Gastrocnemius medialis (tissue), 4 donors: ENCODE measurements at regions of chr14 and their contacts with region 1.

Region 1: DNA sequence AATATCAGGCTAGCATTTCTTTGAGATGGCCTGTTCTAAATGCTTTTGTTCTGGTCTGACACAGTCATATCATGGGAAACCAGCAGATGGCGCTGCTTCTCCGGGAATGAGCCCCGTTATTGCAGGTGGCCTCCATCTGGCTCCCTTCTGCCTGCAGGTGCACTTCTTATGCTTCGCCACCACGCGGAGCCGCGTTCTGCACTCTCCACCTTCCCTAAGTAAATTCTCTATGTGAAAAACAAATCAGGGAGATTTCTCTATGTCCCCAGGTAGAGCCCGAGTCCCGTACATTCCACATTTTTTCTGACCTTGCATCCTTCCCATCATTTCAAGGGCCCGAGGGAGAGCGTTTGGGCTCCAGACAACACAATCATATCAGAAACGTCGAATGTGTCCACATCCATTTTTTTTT is 26.2 kb downstream of the GLRX5 start:
- DNase-seq: peak; percentile 56 to 73
- ATAC-seq: peak; percentile 79 to 95
- H3K4me3 ChIP-seq: no peak overlapping the region
- H3K27ac ChIP-seq: no peak overlapping the region
- H3K4me1 ChIP-seq: peaks cover 0 to 2% of the 10 kb centered on the region in 2 donors
- H3K27me3 ChIP-seq: no peaks in the 10 kb centered on the region
- CTCF ChIP-seq: peak; percentile 88 to 95 (median 92)
- POLR2A ChIP-seq: no peak

Region 2: DNA sequence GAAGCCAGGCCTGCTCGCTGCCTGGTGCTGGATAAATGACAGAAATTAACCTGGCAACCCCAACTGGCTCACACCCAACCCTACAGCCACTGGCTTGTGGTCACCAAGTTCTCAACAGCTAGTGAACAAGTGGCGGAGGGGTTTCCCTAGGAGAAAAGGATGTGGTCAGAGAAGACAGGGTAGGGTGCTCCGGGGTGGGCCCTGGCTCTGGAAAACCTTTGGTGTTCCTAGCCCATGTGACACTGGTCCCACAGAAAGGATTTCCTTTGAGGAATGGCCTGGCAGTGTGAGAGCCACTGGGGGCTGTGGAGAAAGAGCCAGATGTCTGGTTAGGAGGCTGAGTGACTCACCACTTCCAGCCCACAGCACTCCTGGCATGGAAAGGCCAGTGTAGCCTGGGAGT is 53.3 kb before region 1 on chr14:
- in situ Hi-C with region 1: no loop called
- intact Hi-C with region 1: no loop called
- DNase-seq: peak; percentile 48 to 76
- ATAC-seq: peak; percentile 55 to 69
- H3K4me3 ChIP-seq: no peak overlapping the region
- H3K27ac ChIP-seq: peak overlapping the region; percentile 74 to 84 (median 82)
- H3K4me1 ChIP-seq: peaks cover 63 to 72% of the 10 kb centered on the region in 2 donors
- H3K27me3 ChIP-seq: no peaks in the 10 kb centered on the region
- CTCF ChIP-seq: no peak
- POLR2A ChIP-seq: no peak

Region 3: GRCh38 chr14:95683793-95684192 is 122.8 kb after region 1 on chr14:
- in situ Hi-C with region 1: loop called in 2 of 4 experiments (anchors 5 to 10 kb)
- intact Hi-C with region 1: loop called (anchors 1 kb)
- DNase-seq: no peak
- ATAC-seq: peak in 1 of 2 donors; percentile 51
- H3K4me3 ChIP-seq: no peak overlapping the region
- H3K27ac ChIP-seq: no peak overlapping the region
- H3K4me1 ChIP-seq: no peaks in the 10 kb centered on the region
- H3K27me3 ChIP-seq: no peaks in the 10 kb centered on the region
- CTCF ChIP-seq: peak in 4 of 5 experiments; percentile 39 to 63 (median 56)
- POLR2A ChIP-seq: no peak

Region 4: GRCh38 chr14:95774265-95775160 is 213.5 kb after region 1 on chr14:
- in situ Hi-C with region 1: loop called in 3 of 4 experiments (anchors 5 to 10 kb)
- intact Hi-C with region 1: loop called (anchors 5 kb)
- DNase-seq: no peak
- ATAC-seq: no peak
- H3K4me3 ChIP-seq: no peak overlapping the region
- H3K27ac ChIP-seq: no peak overlapping the region
- H3K4me1 ChIP-seq: no peaks in the 10 kb centered on the region
- H3K27me3 ChIP-seq: peaks cover 0 to 2% (median 0%) of the 10 kb centered on the region in 3 donors
- CTCF ChIP-seq: peak; percentile 30 to 72 (median 50)
- POLR2A ChIP-seq: no peak

Region 5: DNA sequence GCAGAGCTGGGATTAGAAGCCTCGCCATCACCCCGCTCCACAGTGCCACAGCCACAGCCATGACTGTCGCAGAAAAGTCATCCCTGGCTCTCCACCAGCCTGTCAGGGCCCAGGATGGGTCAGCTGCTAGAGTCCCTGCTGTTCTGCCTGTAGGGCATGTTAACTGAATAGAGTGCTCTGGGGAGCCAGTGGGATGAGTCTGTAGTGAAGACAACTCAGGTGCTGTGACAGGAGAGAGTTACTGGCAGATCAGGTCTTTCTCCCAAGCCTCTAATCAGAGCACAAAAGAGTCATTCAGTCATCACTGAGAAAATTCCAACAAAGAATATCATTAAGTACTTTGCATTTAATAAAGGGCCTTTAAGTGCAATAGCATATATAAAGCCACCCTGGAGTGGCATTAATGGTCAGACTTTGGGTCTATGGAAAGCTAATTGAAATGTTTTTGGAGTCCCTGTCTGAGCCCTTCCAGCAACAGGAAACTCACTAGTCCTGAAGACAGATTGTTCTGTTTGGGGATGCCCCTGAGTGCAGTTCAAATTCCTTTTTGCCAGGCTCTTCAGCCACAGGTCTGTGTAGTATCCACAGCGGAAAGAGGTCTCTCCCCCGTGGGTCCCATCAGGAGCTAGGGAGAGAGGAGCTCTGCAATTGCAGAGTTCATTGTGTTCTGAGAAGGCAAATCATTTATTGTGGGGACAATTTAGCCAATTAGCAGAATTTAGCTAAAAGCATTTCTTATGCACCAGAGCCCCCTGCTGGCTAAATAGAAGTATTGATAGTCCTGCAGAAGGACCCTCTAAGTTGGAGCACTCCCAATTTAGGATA is 433.0 kb after region 1 on chr14:
- in situ Hi-C with region 1: loop called (anchors 10 to 25 kb)
- intact Hi-C with region 1: loop called (anchors 5 kb)
- DNase-seq: no peak
- ATAC-seq: no peak
- H3K4me3 ChIP-seq: no peak overlapping the region
- H3K27ac ChIP-seq: no peak overlapping the region
- H3K4me1 ChIP-seq: no peaks in the 10 kb centered on the region
- H3K27me3 ChIP-seq: peaks cover 0 to 8% (median 8%) of the 10 kb centered on the region in 3 donors
- CTCF ChIP-seq: peak in 4 of 5 experiments; percentile 37 to 61 (median 44)
- POLR2A ChIP-seq: no peak

Region 6: GRCh38 chr14:96027431-96028355 is 466.7 kb after region 1 on chr14:
- in situ Hi-C with region 1: no loop called
- intact Hi-C with region 1: no loop called
- DNase-seq: no peak
- ATAC-seq: no peak
- H3K4me3 ChIP-seq: no peak overlapping the region
- H3K27ac ChIP-seq: no peak overlapping the region
- H3K4me1 ChIP-seq: no peaks in the 10 kb centered on the region
- H3K27me3 ChIP-seq: no peaks in the 10 kb centered on the region
- CTCF ChIP-seq: no peak
- POLR2A ChIP-seq: no peak

Region 7: GRCh38 chr14:96268431-96269358 is 707.7 kb after region 1 on chr14:
- in situ Hi-C with region 1: loop called in 1 of 4 experiments (anchors 25 kb)
- intact Hi-C with region 1: no loop called
- DNase-seq: peak in 1 of 2 donors; percentile 30
- ATAC-seq: peak; percentile 58
- H3K4me3 ChIP-seq: no peak overlapping the region
- H3K27ac ChIP-seq: no peak overlapping the region
- H3K4me1 ChIP-seq: no peaks in the 10 kb centered on the region
- H3K27me3 ChIP-seq: no peaks in the 10 kb centered on the region
- CTCF ChIP-seq: no peak
- POLR2A ChIP-seq: no peak

Region 8: DNA sequence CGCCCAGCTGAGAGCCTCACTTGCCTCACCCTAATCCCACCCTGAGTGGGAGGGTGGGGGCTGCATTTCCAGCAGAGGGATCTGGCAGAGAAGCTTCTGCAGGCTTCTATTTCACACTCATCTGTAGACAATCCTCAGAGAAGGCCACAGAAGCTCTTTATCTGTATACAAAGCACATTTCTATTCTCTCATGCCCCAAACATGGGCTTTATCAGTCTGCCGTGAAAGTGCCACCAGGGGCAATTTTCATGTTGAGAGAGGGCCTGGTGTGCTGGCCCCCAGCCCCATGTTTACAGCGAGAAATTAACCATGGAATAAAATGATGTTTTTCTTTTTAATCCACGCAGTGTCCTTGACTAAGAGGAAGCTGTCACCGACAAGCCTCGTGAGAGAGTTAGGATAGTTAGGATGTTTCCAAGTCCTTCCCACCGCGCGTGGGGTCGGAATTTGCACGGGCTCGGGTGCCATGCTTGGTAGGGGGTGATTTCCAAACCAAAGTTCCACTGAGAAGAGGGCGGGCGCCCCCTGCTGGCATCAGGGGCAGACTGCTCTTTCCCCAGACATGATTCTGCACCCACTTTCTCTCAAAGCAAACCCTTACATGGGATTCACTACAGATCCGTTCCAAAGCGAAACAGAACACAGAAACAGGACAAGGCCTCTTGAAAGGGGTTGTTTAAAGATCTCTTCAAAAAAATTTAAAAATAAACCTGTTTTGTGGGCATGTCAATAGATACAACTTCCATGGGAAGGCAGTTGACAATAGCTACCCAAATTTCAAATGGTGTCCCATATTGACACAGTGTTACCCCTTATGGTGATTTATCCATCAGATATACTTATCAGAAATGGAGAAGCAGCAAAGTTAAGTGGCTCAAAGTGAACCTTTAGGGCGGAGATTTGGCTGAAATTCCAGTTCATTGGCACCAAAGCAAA is 714.4 kb after region 1 on chr14:
- in situ Hi-C with region 1: loop called in 2 of 4 experiments (anchors 25 kb)
- intact Hi-C with region 1: no loop called
- DNase-seq: peak; percentile 20 to 24
- ATAC-seq: peak in 1 of 2 donors; percentile 32
- H3K4me3 ChIP-seq: no peak overlapping the region
- H3K27ac ChIP-seq: no peak overlapping the region
- H3K4me1 ChIP-seq: no peaks in the 10 kb centered on the region
- H3K27me3 ChIP-seq: no peaks in the 10 kb centered on the region
- CTCF ChIP-seq: peak; percentile 69 to 86 (median 83)
- POLR2A ChIP-seq: no peak

Region 9: DNA sequence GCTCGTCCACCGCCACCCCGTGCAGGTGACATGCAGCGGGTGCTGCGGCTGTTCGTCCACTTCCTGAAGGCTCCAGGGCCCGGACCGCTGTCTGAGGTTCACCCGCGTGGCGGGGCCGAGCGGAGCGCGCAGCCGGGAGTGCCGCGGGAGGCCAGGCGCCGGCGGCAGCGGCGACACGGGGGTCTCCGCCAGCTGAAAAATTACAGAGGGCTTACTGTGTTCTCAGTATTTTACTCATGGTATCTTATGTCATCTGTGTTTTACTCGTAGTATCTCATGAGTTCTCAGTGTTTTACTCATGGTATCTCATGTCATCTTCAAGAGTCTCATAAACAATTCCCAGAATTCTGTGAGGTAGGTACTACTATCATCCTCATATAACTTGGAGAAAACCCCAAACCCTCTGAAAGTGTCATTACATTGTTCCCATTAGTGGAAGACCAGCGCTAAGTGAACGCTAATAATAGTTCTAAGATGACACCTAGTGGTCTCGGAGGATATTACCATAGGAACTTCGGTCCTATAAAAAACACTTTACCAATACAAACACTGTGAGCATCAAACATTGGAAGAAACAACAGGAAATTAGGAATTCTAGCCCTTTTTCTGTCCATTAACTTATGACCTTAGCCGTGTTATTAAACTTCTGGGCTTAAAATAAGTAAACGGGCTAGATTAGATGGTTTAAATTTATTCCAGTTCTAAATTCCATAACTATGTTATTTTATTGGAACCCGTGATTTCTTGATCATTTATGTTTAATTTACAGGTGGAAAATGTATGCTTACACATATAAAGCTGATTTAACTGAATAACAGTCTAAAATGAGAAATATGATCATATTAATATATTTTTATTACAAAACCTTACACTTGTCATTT is 863.3 kb after region 1 on chr14:
- in situ Hi-C with region 1: loop called in 1 of 4 experiments (anchors 25 kb)
- intact Hi-C with region 1: no loop called
- DNase-seq: no peak
- ATAC-seq: peak; percentile 84 to 89
- H3K4me3 ChIP-seq: peak overlapping the region; percentile 27 to 51 (median 42)
- H3K27ac ChIP-seq: no peak overlapping the region
- H3K4me1 ChIP-seq: no peaks in the 10 kb centered on the region
- H3K27me3 ChIP-seq: no peaks in the 10 kb centered on the region
- CTCF ChIP-seq: peak; percentile 60 to 82 (median 73)
- POLR2A ChIP-seq: no peak